Activated naive CD4-positive, alpha-beta T cell treated with anti-CD3 and anti-CD28 coated beads, Interleukin-2, amount 10 ng/mL, durations not matched to agents 7 days and 5 days (primary cell): ENCODE measurements at regions of chr7 and their contacts with region 1.

Region 1: DNA sequence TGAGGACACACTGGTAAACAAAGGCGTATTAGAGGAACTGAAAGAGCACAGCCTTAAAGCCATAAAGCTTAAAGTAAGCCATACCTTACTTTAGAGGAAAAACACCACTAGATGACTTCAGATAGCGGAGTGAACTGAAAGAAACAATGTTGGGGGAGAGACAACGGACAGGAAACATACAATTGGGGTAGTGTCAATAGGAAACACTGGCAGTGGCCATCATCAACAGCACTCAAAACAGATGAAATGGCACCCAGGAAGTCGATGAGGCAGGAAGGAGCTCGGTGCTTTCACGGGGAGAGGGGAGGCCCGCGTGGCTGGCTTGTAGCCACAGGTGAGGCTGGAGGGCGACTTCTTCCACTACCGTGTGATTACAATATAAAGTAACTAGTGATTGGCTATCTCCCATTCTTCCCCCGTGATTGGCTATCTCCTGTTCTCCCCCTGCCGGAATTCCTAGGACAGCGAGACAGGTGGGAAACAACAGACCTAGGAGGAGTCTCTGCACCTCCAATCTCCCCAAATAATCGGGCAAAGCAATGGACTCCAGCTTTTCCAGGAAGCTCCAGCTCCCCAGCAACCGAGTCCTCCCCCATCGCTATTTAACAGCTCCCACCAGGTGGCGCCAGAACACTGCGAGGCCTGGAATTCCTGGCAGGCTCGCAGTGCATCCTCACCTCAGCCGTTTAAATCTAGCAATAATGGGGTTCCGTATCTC is 2.4 kb upstream of the TAS2R38 start:
- DNase-seq: peak; percentile 71
- H3K4me3 Mint-ChIP-seq: peak overlapping the region; percentile 61
- H3K27ac Mint-ChIP-seq: peak overlapping the region; percentile 42
- H3K4me1 Mint-ChIP-seq: peaks cover 22% of the 10 kb centered on the region
- H3K27me3 Mint-ChIP-seq: peaks cover 3% of the 10 kb centered on the region

Region 2: DNA sequence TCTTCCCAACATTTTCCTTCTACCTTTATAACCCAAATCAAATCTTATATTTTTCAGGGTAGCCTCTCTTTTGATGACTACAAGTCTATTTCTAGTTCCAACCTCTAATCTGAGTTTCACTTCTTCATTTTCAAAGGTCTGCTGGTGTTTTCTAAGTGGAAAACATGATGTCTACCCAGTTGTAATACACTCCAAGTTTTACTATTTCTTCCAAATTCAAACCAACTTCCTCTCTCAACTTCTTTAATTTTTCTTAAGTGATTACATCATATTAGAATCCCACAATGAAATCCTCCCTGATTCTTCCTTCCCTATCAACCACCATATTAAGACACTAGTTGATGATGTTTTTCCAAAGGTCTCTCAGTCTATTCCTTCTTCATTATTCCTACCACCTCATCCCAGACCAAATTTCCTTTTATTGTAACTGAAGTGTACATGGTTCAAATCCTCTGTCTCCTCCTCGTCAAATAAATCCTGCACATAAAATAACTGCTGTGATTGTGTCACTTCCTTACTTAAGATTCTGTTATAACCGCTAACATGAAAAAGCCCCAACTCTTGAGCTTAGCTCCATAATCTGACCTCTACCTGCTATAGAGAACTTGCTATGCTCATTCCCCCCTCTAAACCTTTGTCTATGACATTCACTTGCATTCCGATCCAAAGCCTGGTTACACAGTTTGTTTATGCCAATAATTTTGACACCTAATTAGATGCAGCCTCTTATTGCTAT is 15.1 kb before region 1 on chr7:
- CTCF ChIA-PET with region 1: interaction called, 12 read pairs
- DNase-seq: no peak
- H3K4me3 Mint-ChIP-seq: no peak overlapping the region
- H3K27ac Mint-ChIP-seq: no peak overlapping the region
- H3K4me1 Mint-ChIP-seq: no peaks in the 10 kb centered on the region
- H3K27me3 Mint-ChIP-seq: no peaks in the 10 kb centered on the region

Region 3: DNA sequence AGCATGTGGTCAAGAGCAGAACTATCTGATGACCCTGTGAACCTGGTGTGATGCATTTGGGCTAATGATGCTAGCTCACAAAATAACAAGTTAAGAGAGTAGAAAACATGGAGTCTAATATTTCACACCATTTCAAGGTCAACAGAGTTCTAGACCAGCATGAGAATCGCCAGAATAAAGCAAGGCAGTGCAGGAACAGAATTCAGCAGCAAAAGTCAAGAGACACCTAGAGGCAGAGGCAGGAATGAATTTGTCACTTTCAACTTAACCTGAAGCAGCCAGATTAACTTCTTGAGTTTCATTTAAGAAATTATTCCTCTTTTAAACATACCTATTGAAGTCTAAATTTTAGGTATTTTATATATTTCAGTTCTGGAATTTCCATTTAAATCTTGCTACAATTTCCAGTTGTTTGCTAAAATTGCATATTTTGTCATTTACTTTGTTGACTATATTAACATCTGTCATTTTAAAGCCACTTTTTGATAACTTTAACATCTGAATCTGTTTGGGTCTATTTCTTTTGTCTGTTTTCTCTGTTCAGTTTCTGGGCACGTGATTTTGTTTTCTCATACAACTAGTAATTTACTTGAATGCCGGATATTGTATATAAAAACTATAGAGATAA is 326.1 kb after region 1 on chr7:
- CTCF ChIA-PET with region 1: interaction called, 38 read pairs
- DNase-seq: no peak
- H3K4me3 Mint-ChIP-seq: no peak overlapping the region
- H3K27ac Mint-ChIP-seq: no peak overlapping the region
- H3K4me1 Mint-ChIP-seq: peaks cover 25% of the 10 kb centered on the region
- H3K27me3 Mint-ChIP-seq: peaks cover 37% of the 10 kb centered on the region